Activated CD4-positive, alpha-beta memory T cell treated with anti-CD3 and anti-CD28 coated beads for 36 hours (primary cell): ENCODE measurements at regions of chr5 and their contacts with region 1.

Region 1: GRCh38 chr5:74927336-74927735 is 61.1 kb upstream of the FAM169A start:
- DNase-seq: no peak
- H3K4me3 Mint-ChIP-seq: no peak overlapping the region
- H3K27ac Mint-ChIP-seq: no peak overlapping the region
- H3K4me1 Mint-ChIP-seq: no peaks in the 10 kb centered on the region
- H3K27me3 Mint-ChIP-seq: peaks cover 1% of the 10 kb centered on the region

Region 2: DNA sequence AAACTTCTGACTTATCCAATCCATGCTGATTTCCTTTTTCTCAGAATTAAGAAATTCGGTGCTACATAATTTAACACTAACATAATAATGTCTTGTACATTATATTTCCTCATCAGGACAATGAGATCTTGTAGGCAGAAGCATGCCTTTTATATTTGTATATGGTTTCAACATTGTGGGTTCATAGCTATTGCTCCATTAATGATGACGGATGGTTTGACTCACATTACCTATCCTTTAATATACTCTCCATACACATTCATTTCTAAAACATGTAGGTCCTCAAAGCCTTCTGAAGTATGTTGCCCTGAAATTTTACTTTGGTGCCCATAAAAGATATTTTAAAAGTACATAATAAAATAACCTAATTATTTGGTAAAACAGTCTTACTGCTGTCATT is 186.0 kb after region 1 on chr5:
- CTCF ChIA-PET with region 1: no interaction called
- POLR2A ChIA-PET with region 1: no interaction called
- intact Hi-C with region 1: no loop called
- DNase-seq: no peak
- H3K4me3 Mint-ChIP-seq: no peak overlapping the region
- H3K27ac Mint-ChIP-seq: no peak overlapping the region
- H3K4me1 Mint-ChIP-seq: peaks cover 16% of the 10 kb centered on the region
- H3K27me3 Mint-ChIP-seq: no peaks in the 10 kb centered on the region

Region 3: GRCh38 chr5:75265731-75266130 is 338.4 kb after region 1 on chr5:
- CTCF ChIA-PET with region 1: interaction called, 3 read pairs
- POLR2A ChIA-PET with region 1: no interaction called
- intact Hi-C with region 1: loop called (anchors 1 kb)
- DNase-seq: no peak
- H3K4me3 Mint-ChIP-seq: no peak overlapping the region
- H3K27ac Mint-ChIP-seq: no peak overlapping the region
- H3K4me1 Mint-ChIP-seq: no peaks in the 10 kb centered on the region
- H3K27me3 Mint-ChIP-seq: peaks cover 5% of the 10 kb centered on the region